ENCODE measurements at regions of chr7 and their contacts with region 1.

Region 1: DNA sequence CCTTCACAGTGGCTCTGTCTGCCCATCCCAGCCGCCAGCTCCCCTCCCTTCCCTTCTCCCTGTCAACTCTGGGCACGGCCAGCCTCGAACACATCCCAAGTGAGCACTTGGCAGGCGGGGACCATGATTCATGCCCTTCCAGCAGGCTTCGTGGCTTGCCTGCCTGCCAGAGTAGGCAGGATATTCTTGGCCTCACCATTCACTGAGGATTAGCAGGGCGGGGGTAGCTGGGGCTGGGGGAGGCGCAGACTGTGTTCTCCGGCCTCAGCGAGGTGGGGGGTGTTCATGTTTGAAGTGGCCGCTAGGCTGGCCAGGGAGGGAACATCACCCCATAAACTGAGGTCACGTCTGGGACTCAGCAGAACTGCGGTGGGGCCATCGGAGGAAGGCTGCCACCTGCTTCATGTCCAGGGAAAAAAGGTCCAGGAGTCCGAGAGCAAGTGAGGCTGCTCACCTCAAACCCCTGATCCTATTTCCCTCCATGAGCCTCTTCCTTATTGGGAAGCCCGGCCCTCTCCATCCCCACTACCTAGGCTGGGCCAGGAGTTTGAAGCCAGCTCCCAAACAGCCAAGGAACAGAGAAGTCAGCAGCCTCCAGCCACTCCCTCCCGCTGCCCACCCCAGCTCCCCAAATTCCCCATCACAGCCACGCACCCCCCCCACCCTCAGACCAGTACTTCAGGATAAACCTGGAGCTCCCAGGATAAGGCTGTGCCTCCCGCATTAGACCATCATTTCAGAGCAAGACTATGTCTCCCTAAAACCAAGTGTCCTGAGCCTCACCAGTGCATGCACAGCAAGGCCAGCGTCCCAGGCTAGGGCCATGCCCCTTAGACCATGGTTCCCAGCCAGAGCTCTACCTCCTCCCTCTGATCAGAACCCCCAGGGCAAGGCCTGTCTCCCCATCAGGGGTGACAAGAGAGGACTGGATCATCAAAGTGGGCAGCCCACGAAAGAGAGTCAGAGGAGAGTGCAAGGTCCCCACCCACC is 42.8 kb upstream of the RABGEF1 start:
- DNase-seq: no peak
- H3K4me3 ChIP-seq: no peak overlapping the region
- H3K27ac ChIP-seq: no peak overlapping the region
- H3K4me1 ChIP-seq: no peaks in the 10 kb centered on the region
- H3K27me3 ChIP-seq: no peaks in the 10 kb centered on the region
- CTCF ChIP-seq: no peak
- POLR2A ChIP-seq: no peak

Region 2: GRCh38 chr7:66740302-66740979 is 42.7 kb after region 1 on chr7 and contains the start of gene RABGEF1:
- intact Hi-C with region 1: loop called (anchors 5 kb)
- DNase-seq: peak; percentile 97
- H3K4me3 ChIP-seq: peak within 1 kb of the TSS; percentile 71 to 99
- H3K27ac ChIP-seq: peak within 1 kb of the TSS; percentile 93
- H3K4me1 ChIP-seq: no peaks in the 10 kb centered on the region
- H3K27me3 ChIP-seq: no peaks in the 10 kb centered on the region
- CTCF ChIP-seq: no peak
- POLR2A ChIP-seq: peak; percentile 92
- total RNA-seq, gene RABGEF1: 20.8 to 49.6 TPM

Region 3: DNA sequence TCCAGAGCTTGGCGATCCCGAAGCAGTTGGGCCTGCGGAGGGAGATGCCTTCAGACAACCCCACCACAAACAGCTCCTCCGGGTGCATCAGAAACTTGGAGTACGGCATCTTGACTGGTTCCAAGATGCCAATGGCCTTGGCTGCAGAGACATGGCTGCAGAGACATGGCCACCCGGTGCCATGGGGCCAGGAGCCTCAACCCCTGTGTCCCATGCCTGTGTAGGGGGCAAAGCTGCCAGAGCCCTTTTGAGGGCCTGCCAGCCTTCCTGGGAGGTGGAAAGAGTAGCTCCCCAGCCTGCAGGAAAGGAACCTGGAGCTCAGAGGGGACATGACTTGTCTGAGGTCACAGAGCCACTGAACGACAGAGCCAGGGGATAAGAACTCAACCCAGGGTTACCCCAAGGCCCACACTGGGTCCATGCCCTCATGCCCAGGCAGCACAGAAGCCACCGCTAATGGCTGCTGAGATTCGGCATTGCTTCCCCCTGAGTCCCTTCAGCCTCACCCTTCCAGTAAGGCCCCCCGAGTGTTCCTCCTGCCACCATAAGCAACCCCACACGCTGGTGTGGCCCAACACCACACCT is 126.4 kb after region 1 on chr7:
- intact Hi-C with region 1: no loop called
- DNase-seq: no peak
- H3K4me3 ChIP-seq: no peak overlapping the region
- H3K27ac ChIP-seq: no peak overlapping the region
- H3K4me1 ChIP-seq: no peaks in the 10 kb centered on the region
- H3K27me3 ChIP-seq: no peaks in the 10 kb centered on the region
- CTCF ChIP-seq: no peak
- POLR2A ChIP-seq: no peak